ENCODE measurements at regions of chr19 and their contacts with region 1.

Region 1: DNA sequence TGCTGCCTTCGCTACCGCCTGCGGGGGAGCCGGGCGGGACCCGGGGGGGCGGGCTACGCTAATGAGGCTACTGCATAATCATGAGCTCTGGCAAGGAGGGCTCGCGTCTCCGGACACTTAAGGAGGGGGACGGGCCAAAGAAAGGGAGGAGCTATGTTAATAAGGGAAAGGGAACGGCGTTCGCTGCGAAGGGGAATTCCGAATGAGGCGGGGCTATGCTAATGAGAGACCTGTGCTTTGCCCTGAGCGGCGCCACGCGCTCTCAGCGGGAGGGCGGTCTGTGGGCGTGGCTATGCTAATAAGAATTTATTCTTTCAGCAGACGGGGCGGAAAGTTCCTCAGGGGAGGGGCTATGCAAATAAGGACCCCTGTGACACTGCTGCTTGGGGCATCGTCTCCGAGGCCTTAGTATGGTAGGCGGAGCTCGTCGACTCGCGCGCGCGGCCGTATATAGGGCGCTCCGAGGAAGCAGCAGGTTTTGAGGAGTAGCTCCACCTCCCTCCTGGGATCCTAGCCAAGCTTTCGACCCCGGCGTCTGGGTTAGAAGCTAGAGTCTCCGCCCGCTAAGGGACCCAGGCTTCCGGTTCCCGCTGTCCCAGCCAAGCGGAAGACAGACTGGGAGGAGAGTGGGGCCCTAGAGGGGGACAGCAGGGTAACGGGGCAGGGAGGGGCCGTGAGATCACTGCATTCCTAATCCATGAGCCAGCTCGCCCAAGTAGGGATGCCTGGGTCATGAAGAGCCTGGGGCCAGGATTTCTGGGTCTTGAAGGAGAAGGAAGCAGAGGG is at the start of gene RRAS:
- DNase-seq: peak; percentile 97 to 100 (median 99)
- ATAC-seq: peak; percentile 66
- H3K4me3 ChIP-seq: peak within 1 kb of the TSS; percentile 78
- H3K4me3 Mint-ChIP-seq: peak within 1 kb of the TSS; percentile 95
- H3K27ac ChIP-seq: peak within 1 kb of the TSS; percentile 91 to 96
- H3K27ac Mint-ChIP-seq: peak within 1 kb of the TSS; percentile 97
- H3K4me1 ChIP-seq: peaks cover 64% of the 10 kb centered on the region
- H3K4me1 Mint-ChIP-seq: peaks cover 65% of the 10 kb centered on the region
- H3K27me3 ChIP-seq: no peaks in the 10 kb centered on the region
- H3K27me3 Mint-ChIP-seq: no peaks in the 10 kb centered on the region
- CTCF ChIP-seq: no peak
- total RNA-seq, gene RRAS: 4.2 to 4.7 TPM

Region 2: GRCh38 chr19:49468746-49469447 is 171.4 kb before region 1 on chr19:
- CTCF ChIA-PET with region 1: no interaction called
- POLR2A ChIA-PET with region 1: interaction called, 4 read pairs
- intact Hi-C with region 1: loop called in 1 of 2 experiments (anchors 1 kb)
- DNase-seq: peak; percentile 74 to 99 (median 84)
- ATAC-seq: peak; percentile 75
- H3K4me3 ChIP-seq: peak overlapping the region; percentile 9
- H3K4me3 Mint-ChIP-seq: peak overlapping the region; percentile 84
- H3K27ac ChIP-seq: peak overlapping the region; percentile 86 to 96
- H3K27ac Mint-ChIP-seq: peak overlapping the region; percentile 98
- H3K4me1 ChIP-seq: peaks cover 96% of the 10 kb centered on the region
- H3K4me1 Mint-ChIP-seq: peaks cover 42% of the 10 kb centered on the region
- H3K27me3 ChIP-seq: no peaks in the 10 kb centered on the region
- H3K27me3 Mint-ChIP-seq: no peaks in the 10 kb centered on the region
- CTCF ChIP-seq: no peak

Region 3: DNA sequence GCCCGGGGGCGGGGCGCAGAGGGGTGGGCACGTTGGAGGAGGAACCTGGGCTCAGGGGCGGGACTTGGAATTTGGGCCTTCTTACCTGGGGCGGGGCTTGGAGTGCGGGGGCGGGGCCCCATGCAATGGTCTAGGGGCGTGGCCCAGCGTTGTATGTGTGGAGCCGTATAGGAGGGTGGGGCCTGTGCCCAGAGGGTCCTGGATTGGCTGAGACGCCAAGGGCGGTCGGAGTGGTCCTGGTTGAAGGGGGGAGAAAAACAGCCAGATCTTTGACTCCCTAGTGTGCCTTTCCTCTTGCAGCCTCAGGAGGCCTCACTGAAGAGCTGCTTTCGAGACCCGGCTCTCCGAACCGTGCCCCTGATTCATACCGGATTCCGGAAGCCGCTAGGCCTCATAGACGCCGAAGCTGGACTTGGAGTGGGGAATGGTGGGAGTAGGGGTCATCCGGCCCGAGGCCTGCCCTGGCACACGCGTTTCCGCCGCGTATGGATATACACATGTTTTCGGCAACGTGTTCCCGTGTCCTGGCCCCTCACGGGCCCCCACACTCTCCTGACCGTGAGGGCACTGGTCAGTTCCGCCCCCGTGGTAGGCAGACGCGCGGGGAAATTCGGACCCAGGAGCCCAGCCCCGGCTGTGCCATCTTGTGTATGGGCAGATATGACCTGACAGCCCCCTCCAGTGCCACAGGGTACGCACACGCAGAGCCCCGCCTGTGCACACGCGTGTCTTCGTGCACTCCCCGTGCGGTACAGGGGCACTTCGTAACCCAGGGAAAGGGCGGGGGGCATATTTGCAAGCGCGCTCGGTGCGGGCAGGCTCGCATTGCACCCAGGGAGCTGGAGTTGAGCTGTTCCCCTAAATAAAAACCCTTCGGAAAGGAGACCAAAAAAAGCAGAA is 50.0 kb before region 1 on chr19:
- CTCF ChIA-PET with region 1: interaction called, 3 read pairs
- POLR2A ChIA-PET with region 1: interaction called, 55 read pairs
- intact Hi-C with region 1: loop called (anchors 1 kb)
- DNase-seq: peak; percentile 87 to 99 (median 94)
- ATAC-seq: peak; percentile 70
- H3K4me3 ChIP-seq: peak overlapping the region; percentile 96
- H3K4me3 Mint-ChIP-seq: peak overlapping the region; percentile 82
- H3K27ac ChIP-seq: peak overlapping the region; percentile 77 to 91
- H3K27ac Mint-ChIP-seq: peak overlapping the region; percentile 82
- H3K4me1 ChIP-seq: peaks cover 49% of the 10 kb centered on the region
- H3K4me1 Mint-ChIP-seq: peaks cover 41% of the 10 kb centered on the region
- H3K27me3 ChIP-seq: no peaks in the 10 kb centered on the region
- H3K27me3 Mint-ChIP-seq: no peaks in the 10 kb centered on the region
- CTCF ChIP-seq: no peak

Region 4: DNA sequence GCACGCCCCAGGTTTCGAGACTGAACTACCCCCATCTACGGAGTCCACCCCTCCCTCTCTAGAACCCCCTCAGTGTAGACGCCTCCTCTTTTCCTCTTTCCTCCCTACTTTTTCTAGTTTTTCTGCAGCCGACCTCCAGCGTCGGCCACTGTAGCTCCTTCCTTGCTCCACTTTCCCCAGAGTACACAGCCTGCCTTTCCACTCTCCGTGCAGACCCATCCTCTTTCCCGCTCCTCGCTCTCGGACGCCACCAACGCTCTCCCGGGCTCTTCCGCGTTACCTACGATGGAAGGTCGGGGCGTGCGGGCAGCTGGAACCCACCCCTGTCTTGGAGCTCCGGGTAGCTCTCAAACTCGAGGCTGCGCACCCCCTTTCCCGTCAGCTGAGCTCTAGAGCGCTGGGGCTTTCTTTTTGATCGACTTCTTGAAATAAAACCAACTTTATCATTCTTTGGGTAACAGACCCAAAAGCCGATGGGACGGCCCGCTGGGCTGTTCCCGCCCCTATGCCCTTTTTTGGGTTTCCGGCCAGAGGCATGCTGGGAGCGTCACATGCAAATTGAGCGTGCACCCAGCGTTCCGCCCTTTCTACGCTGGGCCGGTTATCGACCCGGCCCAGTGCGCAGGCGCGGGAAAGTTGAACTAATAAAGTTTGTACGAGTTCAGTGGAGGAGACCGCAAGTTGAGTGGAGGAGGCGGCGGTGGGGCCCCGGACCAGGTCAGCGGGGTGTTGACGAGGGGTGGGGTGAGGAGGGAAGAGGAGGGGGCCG is 25.2 kb after region 1 on chr19 and contains the starts of genes BCL2L12 and IRF3:
- CTCF ChIA-PET with region 1: interaction called, 4 read pairs
- POLR2A ChIA-PET with region 1: interaction called, 125 read pairs
- intact Hi-C with region 1: loop called (anchors 1 kb)
- DNase-seq: peak; percentile 99 to 100 (median 99)
- ATAC-seq: peak; percentile 78
- H3K4me3 ChIP-seq: peak within 1 kb of the TSS; percentile 62
- H3K4me3 Mint-ChIP-seq: peak within 1 kb of the TSS; percentile 95
- H3K27ac ChIP-seq: peak within 1 kb of the TSS; percentile 57 to 90
- H3K27ac Mint-ChIP-seq: peak within 1 kb of the TSS; percentile 88
- H3K4me1 ChIP-seq: peaks cover 44% of the 10 kb centered on the region
- H3K4me1 Mint-ChIP-seq: peaks cover 18% of the 10 kb centered on the region
- H3K27me3 ChIP-seq: no peaks in the 10 kb centered on the region
- H3K27me3 Mint-ChIP-seq: no peaks in the 10 kb centered on the region
- CTCF ChIP-seq: no peak
- total RNA-seq, gene BCL2L12: 9.9 to 11.3 TPM
- total RNA-seq, gene IRF3: 109 to 119 TPM

Region 5: GRCh38 chr19:50025024-50025789 is 384.9 kb after region 1 on chr19 and contains the start of gene VRK3:
- CTCF ChIA-PET with region 1: no interaction called
- POLR2A ChIA-PET with region 1: interaction called, 6 read pairs
- intact Hi-C with region 1: loop called in 1 of 2 experiments (anchors 5 kb)
- DNase-seq: peak; percentile 95 to 100 (median 98)
- ATAC-seq: peak; percentile 83
- H3K4me3 ChIP-seq: peak within 1 kb of the TSS; percentile 94
- H3K4me3 Mint-ChIP-seq: peak within 1 kb of the TSS; percentile 87
- H3K27ac ChIP-seq: peak within 1 kb of the TSS; percentile 96 to 98
- H3K27ac Mint-ChIP-seq: peak within 1 kb of the TSS; percentile 94
- H3K4me1 ChIP-seq: peaks cover 49% of the 10 kb centered on the region
- H3K4me1 Mint-ChIP-seq: peaks cover 59% of the 10 kb centered on the region
- H3K27me3 ChIP-seq: no peaks in the 10 kb centered on the region
- H3K27me3 Mint-ChIP-seq: no peaks in the 10 kb centered on the region
- CTCF ChIP-seq: no peak
- total RNA-seq, gene VRK3: 65.1 to 65.4 TPM